ENCODE measurements at regions of chr11 and their contacts with region 1.

Region 1: DNA sequence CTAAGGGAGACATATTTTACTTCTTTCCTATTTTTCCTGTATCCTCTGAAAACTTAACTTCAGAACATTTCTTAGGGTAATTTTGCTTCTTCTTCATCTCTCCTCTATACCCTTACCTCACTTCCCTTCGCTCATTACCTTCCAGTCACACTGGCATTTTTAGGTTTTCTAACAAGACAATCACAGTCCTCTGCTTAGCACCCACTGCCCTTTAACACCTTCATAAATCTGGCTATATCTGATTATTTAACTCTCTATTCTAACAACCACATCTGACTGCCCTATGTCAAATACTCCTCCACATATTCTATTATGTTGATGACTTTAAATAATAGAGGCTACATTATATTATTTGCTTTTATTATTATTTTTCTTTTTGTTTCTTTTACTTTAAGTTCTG is 1058.0 kb upstream of the CNTN5 start:
- DNase-seq: no peak
- H3K4me3 ChIP-seq: no peak overlapping the region
- H3K27ac ChIP-seq: no peak overlapping the region
- H3K4me1 ChIP-seq: peaks cover 16% of the 10 kb centered on the region
- H3K27me3 ChIP-seq: no peaks in the 10 kb centered on the region
- CTCF ChIP-seq: no peak

Region 2: GRCh38 chr11:97974798-97975498 is 12.2 kb after region 1 on chr11:
- CTCF ChIA-PET with region 1: no interaction called
- POLR2A ChIA-PET with region 1: interaction called, 14 read pairs
- intact Hi-C with region 1: no loop called
- DNase-seq: no peak
- H3K4me3 ChIP-seq: no peak overlapping the region
- H3K27ac ChIP-seq: no peak overlapping the region
- H3K4me1 ChIP-seq: no peaks in the 10 kb centered on the region
- H3K27me3 ChIP-seq: no peaks in the 10 kb centered on the region
- CTCF ChIP-seq: no peak